ENCODE measurements at regions of chr19 and their contacts with region 1.

Region 1: GRCh38 chr19:9140159-9140874 is at the start of gene ZNF317:
- DNase-seq: peak; percentile 86
- CTCF ChIP-seq: no peak

Region 2: DNA sequence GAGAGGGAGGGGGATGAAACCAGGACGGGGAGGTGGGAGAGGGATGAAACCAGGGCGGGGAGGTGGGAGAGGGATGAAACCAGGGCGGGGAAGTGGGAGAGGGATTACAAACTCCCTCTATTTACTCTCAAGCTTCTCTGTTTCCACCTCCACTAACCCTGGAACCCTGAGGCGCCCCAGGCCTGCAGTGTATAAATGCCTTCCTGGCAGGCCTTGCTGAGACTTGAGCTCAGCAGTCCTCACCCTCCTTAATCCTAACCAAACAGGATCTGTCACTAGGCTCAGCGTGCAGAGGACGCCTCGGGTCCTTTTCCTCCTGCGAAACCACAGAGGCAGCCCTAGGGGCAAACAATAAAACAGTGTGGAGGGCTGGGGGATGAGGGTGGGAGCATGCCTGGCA is 85.6 kb before region 1 on chr19:
- in situ Hi-C with region 1: no loop called
- DNase-seq: no peak
- CTCF ChIP-seq: no peak

Region 3: GRCh38 chr19:9621156-9622037 is 481.1 kb after region 1 on chr19 and contains the start of gene ZNF561:
- in situ Hi-C with region 1: loop called (anchors 25 kb)
- DNase-seq: peak; percentile 78
- CTCF ChIP-seq: no peak

Region 4: DNA sequence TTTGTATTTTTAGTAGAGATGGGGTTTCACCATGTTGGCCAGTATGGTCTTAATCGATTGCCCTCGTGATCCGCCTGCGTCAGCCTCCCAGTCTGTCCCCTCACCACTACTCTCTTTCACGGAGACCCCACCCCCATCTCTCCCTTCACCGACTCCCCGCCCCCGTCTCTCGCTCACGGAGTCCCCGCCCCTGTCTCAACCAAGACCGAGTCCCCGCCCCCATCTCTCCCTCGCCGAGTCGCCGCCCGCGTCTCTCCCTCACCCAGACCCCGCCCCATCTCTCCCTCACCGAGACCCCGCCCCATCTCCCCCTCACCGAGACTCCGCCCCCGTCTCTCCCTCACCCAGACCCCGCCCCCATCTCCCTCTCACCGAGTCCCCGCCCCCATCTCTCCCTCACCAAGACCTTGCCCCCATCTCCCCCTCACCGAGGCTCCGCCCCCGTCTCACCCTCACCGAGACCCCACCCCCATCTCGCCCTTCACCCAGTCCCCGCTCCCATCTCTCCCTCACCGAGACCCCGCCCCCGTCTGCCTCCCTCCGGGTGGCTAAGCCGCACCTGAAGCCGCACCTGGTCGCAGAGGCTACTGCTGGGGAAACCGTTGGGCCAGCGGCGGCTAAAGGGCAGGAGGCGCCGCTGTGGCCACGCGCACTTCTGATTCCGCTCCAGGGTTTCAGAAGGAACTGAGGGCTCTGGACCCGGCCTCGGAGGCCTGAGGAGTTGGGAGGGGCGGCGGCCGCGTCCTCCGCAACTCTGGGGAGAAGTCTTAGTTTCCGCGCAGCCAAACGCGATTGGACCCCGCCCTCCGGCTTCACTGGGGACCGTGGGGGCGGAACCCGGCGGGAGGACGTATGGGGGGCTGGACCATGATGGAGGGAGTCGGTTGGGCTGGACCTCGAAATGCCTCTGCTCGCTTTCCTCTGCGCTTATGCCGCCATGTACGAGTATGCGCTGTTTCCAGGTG is 645.3 kb after region 1 on chr19:
- in situ Hi-C with region 1: loop called (anchors 25 kb)
- DNase-seq: peak; percentile 94
- CTCF ChIP-seq: no peak